ENCODE measurements at regions of chr19 and their contacts with region 1.

Region 1: GRCh38 chr19:43446746-43447489 is 18.5 kb downstream of the LYPD3 start:
- DNase-seq: peak; percentile 38 to 50
- ATAC-seq: peak; percentile 70 to 75
- H3K4me3 ChIP-seq: no peak overlapping the region
- H3K27ac ChIP-seq: no peak overlapping the region
- H3K4me1 ChIP-seq: no peaks in the 10 kb centered on the region
- H3K27me3 ChIP-seq: no peaks in the 10 kb centered on the region
- CTCF ChIP-seq: peak; percentile 84 to 95 (median 93)
- POLR2A ChIP-seq: no peak

Region 2: GRCh38 chr19:43519436-43520088 is 72.6 kb after region 1 on chr19:
- in situ Hi-C with region 1: loop called (anchors 5 kb)
- intact Hi-C with region 1: loop called (anchors 1 kb)
- DNase-seq: peak; percentile 36 to 56
- ATAC-seq: peak; percentile 66
- H3K4me3 ChIP-seq: no peak overlapping the region
- H3K27ac ChIP-seq: no peak overlapping the region
- H3K4me1 ChIP-seq: peaks cover 0 to under 1% of the 10 kb centered on the region in 2 donors
- H3K27me3 ChIP-seq: no peaks in the 10 kb centered on the region
- CTCF ChIP-seq: peak; percentile 73 to 87 (median 85)
- POLR2A ChIP-seq: no peak

Region 3: GRCh38 chr19:43668406-43669158 is 221.7 kb after region 1 on chr19:
- in situ Hi-C with region 1: loop called in 1 of 4 experiments (anchors 25 kb)
- intact Hi-C with region 1: no loop called
- DNase-seq: peak; percentile 92 to 93
- ATAC-seq: peak; percentile 94
- H3K4me3 ChIP-seq: peak overlapping the region; percentile 50 to 68 (median 60)
- H3K27ac ChIP-seq: peak overlapping the region; percentile 74 to 87 (median 86)
- H3K4me1 ChIP-seq: peaks cover 2 to 5% of the 10 kb centered on the region in 2 donors
- H3K27me3 ChIP-seq: peaks cover 15 to 35% (median 27%) of the 10 kb centered on the region in 3 donors
- CTCF ChIP-seq: no peak
- POLR2A ChIP-seq: peak; percentile 54 to 84